Left colon (tissue), 2 donors: ENCODE measurements at regions of chr1 and their contacts with region 1.

Region 1: DNA sequence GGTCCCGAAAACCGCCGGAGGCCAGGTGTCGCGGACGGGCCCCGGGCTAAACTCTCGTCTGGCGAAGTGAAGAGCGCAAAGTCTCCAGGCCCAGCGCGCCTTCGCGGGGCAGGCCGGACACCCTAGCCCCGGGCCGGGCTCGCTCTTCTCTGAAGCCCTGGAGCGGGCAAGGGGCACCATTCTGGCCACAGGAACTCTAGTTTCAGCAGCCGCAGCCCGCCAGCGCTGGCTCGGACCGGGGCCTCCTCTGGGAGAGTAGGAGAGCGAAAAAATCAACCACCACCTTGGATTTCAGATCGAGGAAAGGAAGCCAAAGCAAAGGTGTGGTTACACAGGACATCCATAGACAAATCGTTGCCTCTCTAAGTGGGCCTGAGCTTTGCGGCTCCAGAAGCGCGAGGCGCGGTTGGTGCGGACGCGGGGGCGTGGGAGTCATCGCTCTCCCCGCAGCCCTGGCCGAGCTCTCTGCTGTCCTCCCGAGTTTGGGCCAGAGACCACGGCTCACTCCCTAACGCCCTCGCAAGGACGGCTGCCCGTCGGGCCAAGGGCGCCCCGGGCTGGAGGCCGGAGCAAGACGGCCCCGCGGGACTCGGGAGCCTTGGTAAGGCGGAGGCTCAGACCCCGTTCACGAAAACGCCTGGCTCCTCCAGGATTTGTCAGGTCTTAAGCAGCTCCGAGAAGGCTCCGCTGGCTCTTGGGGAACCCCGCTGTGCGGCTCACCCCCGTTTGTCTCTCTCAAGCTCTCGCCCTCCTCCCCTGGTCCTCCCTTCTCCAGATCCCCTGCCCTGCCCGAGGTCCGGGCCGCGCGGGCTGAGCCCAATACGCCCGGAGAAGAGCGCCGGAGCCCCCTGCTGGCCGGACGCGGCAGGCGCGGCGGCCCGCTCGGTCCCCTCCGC is 132.9 kb upstream of the DPYD start:
- DNase-seq: peak in 1 of 2 donors; percentile 51
- ATAC-seq: peak; percentile 97

Region 2: DNA sequence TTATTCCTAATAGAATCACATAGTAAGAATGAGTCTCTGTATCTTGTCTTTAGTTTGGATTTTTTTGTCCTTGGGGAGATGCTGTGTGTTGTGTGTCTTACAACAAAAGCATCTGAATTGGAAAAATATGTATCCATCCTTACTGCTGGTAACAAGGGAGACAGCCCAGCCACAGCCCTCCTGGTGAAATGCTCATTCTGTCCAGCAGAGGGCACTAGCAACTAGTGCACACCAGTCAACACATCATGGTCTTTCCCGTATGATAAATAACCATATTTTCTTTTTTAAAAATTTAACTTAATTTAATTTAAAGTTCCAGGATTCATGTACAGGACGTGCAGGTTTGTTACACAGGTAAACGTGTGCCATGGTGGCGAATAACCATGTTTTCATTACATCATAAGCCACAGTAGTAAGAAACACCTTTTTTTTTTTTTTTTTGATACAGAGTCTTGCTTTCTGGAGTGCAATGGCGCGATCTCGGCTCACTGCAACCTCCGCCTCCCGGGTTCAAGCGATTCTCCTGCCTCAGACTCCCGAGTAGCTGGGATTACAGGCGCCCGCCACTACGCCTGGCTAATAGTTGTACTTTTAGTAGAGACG is 1087.1 kb before region 1 on chr1:
- intact Hi-C with region 1: loop called in 1 of 2 experiments (anchors 10 kb)
- DNase-seq: peak; percentile 47 to 74
- ATAC-seq: peak; percentile 69

Region 3: DNA sequence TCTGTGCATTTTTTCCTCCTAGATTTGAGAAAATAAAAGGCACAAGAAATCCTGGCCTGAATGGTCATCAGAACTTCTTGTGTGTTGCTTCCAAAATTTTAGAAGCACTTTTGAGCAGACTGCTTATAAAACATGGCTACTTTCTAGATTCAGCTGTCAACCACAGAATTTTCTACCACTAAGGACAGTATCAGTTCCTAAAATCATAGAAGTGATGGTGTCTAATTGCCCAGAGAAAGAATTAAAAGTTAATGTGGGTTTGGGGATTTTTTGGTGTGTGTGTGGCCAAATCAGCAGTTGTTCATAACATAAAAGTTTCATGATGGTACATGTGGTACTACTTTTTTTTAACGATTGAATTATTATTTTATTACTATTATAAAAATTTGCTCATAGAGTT is 436.4 kb after region 1 on chr1:
- intact Hi-C with region 1: no loop called
- DNase-seq: no peak
- ATAC-seq: no peak